Activated CD4-positive, alpha-beta T cell treated with anti-CD3 and anti-CD28 coated beads for 36 hours (primary cell): ENCODE measurements at regions of chr19 and their contacts with region 1.

Region 1: DNA sequence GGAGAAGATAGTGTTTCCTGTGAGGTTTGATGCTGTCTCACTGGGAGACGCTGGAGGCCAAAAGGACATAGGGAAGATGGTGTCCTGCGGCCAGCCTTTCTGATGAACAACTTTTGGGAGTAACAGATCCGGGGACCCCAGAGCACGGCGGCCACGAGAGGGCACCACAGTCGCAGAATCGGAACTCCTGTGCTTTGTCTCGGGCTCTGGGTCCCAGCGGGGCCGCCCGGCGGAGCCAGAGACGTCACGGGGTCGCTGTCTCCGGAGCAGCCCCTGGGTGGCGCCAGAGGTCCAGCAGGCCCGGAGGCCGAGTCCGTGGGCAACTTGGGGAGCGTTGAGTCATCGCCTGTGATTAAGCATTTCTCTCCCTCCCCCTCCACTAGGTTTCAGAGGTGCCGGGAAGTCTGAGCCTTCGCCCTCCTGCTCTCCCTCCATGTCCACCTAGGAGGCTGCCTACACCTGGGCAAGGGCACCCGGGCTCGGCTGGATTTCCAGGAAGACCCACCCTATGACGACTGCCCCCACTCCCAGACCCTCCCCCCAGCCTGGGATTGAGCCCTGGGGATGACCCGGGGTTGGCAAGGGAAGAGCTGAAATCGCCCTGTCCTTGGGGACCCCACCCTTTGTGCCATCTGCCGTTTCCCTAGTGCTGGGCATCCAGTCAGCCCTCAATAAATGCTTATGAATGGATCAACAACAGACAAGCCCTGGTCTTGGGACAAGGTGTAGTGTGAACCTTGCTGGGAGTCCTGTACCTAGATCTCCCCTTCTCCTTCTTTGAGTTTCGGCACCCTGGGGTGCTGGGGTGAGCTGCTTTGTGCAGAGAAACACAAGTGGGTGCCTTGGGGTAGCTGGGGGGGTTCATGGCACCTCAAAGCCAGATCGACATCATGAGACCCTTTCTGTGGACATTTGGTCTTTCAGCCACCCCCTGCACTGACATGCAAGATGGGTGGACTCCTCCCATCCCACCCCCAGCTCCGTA is 3.4 kb downstream of the NANOS3 start:
- DNase-seq: peak; percentile 99
- ATAC-seq: peak; percentile 94
- H3K4me3 Mint-ChIP-seq: peak overlapping the region; percentile 49
- H3K27ac Mint-ChIP-seq: peak overlapping the region; percentile 85
- H3K4me1 Mint-ChIP-seq: peaks cover 35% of the 10 kb centered on the region
- H3K27me3 Mint-ChIP-seq: no peaks in the 10 kb centered on the region

Region 2: GRCh38 chr19:13597640-13598039 is 282.7 kb before region 1 on chr19:
- CTCF ChIA-PET with region 1: no interaction called
- POLR2A ChIA-PET with region 1: no interaction called
- intact Hi-C with region 1: loop called in 1 of 2 experiments (anchors 1 kb)
- DNase-seq: peak; percentile 74
- ATAC-seq: peak; percentile 95
- H3K4me3 Mint-ChIP-seq: no peak overlapping the region
- H3K27ac Mint-ChIP-seq: no peak overlapping the region
- H3K4me1 Mint-ChIP-seq: no peaks in the 10 kb centered on the region
- H3K27me3 Mint-ChIP-seq: peaks cover 10% of the 10 kb centered on the region

Region 3: GRCh38 chr19:13986348-13986904 is 106.1 kb after region 1 on chr19:
- CTCF ChIA-PET with region 1: no interaction called
- POLR2A ChIA-PET with region 1: no interaction called
- intact Hi-C with region 1: loop called in 1 of 2 experiments (anchors 1 kb)
- DNase-seq: peak; percentile 100
- ATAC-seq: peak; percentile 92
- H3K4me3 Mint-ChIP-seq: peak overlapping the region; percentile 63
- H3K27ac Mint-ChIP-seq: peak overlapping the region; percentile 97
- H3K4me1 Mint-ChIP-seq: peaks cover 65% of the 10 kb centered on the region
- H3K27me3 Mint-ChIP-seq: no peaks in the 10 kb centered on the region

Region 4: GRCh38 chr19:14021474-14021873 is 141.1 kb after region 1 on chr19:
- CTCF ChIA-PET with region 1: no interaction called
- POLR2A ChIA-PET with region 1: no interaction called
- intact Hi-C with region 1: no loop called
- DNase-seq: peak; percentile 34
- ATAC-seq: peak; percentile 66
- H3K4me3 Mint-ChIP-seq: no peak overlapping the region
- H3K27ac Mint-ChIP-seq: no peak overlapping the region
- H3K4me1 Mint-ChIP-seq: peaks cover 10% of the 10 kb centered on the region
- H3K27me3 Mint-ChIP-seq: no peaks in the 10 kb centered on the region

Region 5: GRCh38 chr19:14048443-14049153 is 168.2 kb after region 1 on chr19:
- CTCF ChIA-PET with region 1: interaction called, 8 read pairs
- POLR2A ChIA-PET with region 1: no interaction called
- intact Hi-C with region 1: loop called in 1 of 2 experiments (anchors 1 kb)
- DNase-seq: peak; percentile 87
- ATAC-seq: peak; percentile 87
- H3K4me3 Mint-ChIP-seq: no peak overlapping the region
- H3K27ac Mint-ChIP-seq: peak overlapping the region; percentile 25
- H3K4me1 Mint-ChIP-seq: peaks cover 4% of the 10 kb centered on the region
- H3K27me3 Mint-ChIP-seq: no peaks in the 10 kb centered on the region

Region 6: DNA sequence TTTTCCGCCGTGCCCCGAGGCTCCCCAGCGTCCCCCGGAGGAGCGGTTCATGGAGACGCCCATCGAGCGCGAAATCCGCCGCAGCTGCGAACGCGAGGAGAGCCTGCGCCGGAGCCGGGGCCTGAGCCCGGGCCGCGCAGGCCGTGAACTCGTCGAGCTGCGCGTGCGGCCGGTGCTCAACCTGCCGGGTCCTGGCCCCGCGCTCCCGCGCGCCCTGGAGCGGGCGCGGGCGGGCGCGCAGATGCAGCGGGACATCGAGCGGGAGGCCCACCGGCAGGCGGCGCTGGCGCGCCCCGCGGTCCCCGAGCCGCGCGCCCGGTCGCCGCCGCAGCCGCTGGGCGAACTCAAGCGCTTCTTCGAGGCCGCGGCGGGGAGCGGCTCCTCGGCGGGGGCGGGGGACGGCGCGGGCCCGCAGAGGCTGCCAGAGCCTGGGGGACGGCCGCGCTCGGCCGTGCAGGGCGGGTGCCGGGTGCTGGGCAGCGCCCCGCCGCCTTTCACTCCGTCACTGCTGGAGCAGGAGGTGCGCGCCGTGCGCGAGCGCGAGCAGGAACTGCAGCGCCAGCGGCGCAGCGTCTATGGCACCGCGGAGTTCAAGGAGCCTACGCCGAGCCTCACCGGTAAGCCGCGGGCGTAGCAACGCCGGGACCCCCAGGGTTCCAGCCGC is 193.0 kb after region 1 on chr19:
- CTCF ChIA-PET with region 1: interaction called, 16 read pairs
- POLR2A ChIA-PET with region 1: no interaction called
- intact Hi-C with region 1: loop called (anchors 1 kb)
- DNase-seq: peak; percentile 87
- ATAC-seq: peak; percentile 74
- H3K4me3 Mint-ChIP-seq: peak overlapping the region; percentile 87
- H3K27ac Mint-ChIP-seq: peak overlapping the region; percentile 80
- H3K4me1 Mint-ChIP-seq: peaks cover 21% of the 10 kb centered on the region
- H3K27me3 Mint-ChIP-seq: peaks cover 2% of the 10 kb centered on the region

Region 7: GRCh38 chr19:14117668-14118164 is 237.4 kb after region 1 on chr19 and contains the start of gene PRKACA:
- CTCF ChIA-PET with region 1: interaction called, 3 read pairs
- POLR2A ChIA-PET with region 1: no interaction called
- intact Hi-C with region 1: loop called in 1 of 2 experiments (anchors 1 kb)
- DNase-seq: peak; percentile 99
- ATAC-seq: peak; percentile 98
- H3K4me3 Mint-ChIP-seq: peak within 1 kb of the TSS; percentile 78
- H3K27ac Mint-ChIP-seq: peak within 1 kb of the TSS; percentile 77
- H3K4me1 Mint-ChIP-seq: peaks cover 41% of the 10 kb centered on the region
- H3K27me3 Mint-ChIP-seq: no peaks in the 10 kb centered on the region
- total RNA-seq, gene PRKACA: 58.1 to 68.7 TPM

Region 8: DNA sequence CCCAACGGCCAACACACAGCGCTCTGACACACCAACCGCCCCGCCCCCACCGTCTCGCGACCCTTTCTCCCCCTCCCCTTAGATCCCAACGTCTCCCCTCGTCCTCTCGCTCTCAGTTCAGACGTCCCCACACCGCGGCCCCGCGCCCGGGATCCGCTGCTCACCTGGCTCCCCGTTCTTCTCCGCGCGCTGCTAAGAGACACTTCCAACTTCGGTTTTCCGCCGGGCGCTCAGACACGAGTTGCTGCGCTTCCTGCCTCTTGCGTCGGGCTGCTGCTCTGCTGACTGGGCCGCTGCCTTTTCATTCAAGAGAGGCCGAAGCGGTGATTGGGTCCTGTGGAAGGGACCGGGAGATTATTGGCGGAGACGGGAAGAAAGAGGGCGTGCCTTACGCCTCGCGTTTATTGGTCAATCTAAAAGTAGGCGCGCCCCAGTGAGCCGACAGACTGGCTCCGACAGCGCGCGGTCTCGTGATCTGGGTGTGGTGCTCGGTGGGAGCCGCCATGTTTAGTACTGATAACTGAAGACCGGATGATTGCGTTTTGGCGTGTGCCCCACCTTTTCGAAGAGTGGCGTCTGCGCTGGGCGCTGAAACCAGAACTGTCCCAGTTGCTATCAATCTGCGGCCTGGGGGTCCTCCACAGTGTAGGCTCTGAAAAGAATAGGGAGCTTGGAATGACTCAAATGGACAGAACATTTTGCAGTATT is 538.9 kb after region 1 on chr19 and contains the start of gene DDX39A:
- CTCF ChIA-PET with region 1: no interaction called
- POLR2A ChIA-PET with region 1: no interaction called
- intact Hi-C with region 1: loop called in 1 of 2 experiments (anchors 2 kb)
- DNase-seq: peak; percentile 99
- ATAC-seq: peak; percentile 95
- H3K4me3 Mint-ChIP-seq: peak within 1 kb of the TSS; percentile 82
- H3K27ac Mint-ChIP-seq: peak within 1 kb of the TSS; percentile 92
- H3K4me1 Mint-ChIP-seq: peaks cover 29% of the 10 kb centered on the region
- H3K27me3 Mint-ChIP-seq: no peaks in the 10 kb centered on the region
- total RNA-seq, gene DDX39A: 168 to 185 TPM